A673 (cell line): ENCODE measurements at regions of chr19 and their contacts with region 1.

Region 1: DNA sequence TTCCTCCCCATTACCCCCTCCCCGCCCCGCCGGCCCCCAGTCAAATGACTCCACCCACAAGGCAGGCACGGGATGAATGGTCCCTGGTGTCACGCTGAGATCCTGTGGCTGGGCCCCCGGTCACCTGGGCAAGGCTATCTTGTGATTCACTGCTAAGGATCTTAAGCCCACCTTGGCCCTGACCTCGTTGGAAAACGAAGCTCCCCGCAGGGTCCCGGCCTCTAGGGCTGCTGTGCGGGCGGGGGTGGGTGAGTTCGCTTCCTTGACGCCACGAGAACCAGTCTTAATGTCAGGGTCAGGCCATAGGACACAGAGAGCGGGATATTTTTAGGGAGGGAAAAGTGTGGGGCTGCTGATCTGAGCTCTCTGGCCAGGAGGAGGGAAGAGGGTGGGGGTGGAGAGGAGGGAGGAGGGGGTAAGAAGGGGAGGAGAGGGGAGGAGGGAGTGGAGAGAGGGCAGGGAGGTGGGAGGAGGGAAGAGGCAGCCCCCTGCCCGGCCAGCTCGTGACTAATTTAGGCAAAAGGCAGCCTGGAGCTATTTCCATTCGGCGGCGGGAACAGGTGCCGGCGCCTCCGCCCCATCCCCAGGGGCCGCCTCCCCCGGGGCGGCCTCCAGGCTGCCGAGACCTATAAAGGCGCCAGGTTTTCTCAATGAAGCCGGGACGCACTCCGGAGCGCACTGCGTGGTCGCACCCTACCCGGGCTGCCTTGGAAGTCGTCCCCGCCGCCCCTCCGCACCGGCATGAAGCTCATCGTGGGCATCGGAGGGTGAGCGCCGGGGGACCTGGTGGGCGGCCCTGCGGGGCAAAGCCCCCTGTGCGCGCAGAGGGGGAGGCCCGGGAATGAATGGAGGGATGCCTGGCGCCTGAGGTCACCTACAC is at the start of gene NMRK2:
- DNase-seq: no peak
- H3K4me3 ChIP-seq: no peak within 1 kb of the TSS
- H3K27ac ChIP-seq: no peak within 1 kb of the TSS
- H3K4me1 ChIP-seq: no peaks in the 10 kb centered on the region
- H3K27me3 ChIP-seq: peaks cover 12% of the 10 kb centered on the region
- CTCF ChIP-seq: no peak
- total RNA-seq, gene NMRK2: not detected in 2 replicates

Region 2: DNA sequence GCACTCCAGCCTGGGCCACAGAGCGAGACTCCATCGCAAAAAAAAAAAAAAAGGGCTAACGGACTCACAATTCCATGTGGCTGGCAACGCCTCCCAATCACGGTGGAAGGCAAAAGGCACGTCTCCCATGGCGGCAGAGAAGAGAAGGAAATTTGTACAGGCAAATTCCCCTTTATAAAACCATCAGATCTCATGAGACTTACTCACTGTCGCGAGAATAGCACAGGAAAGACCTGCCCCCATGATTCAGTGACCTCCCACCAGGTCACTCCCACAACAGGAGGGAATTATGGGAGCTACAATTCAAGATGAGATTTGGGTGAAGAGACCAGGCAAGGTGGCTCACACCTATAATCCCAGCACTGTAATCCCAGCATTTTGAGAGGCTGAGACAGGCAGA is 19.0 kb before region 1 on chr19:
- CTCF ChIA-PET with region 1: interaction called, 16 read pairs
- POLR2A ChIA-PET with region 1: interaction called, 4 read pairs
- intact Hi-C with region 1: no loop called
- DNase-seq: no peak
- H3K4me3 ChIP-seq: no peak overlapping the region
- H3K27ac ChIP-seq: no peak overlapping the region
- H3K4me1 ChIP-seq: no peaks in the 10 kb centered on the region
- H3K27me3 ChIP-seq: no peaks in the 10 kb centered on the region
- CTCF ChIP-seq: no peak

Region 3: GRCh38 chr19:4256563-4256962 is 323.4 kb after region 1 on chr19:
- CTCF ChIA-PET with region 1: no interaction called
- POLR2A ChIA-PET with region 1: no interaction called
- intact Hi-C with region 1: no loop called
- DNase-seq: peak; percentile 33
- H3K4me3 ChIP-seq: no peak overlapping the region
- H3K27ac ChIP-seq: no peak overlapping the region
- H3K4me1 ChIP-seq: no peaks in the 10 kb centered on the region
- H3K27me3 ChIP-seq: no peaks in the 10 kb centered on the region
- CTCF ChIP-seq: 0 out of 2 replicates have a peak, but pooled peaks have one; percentile 23